AG04450 (cell line): ENCODE measurements at regions of chr2 and their contacts with region 1.

Region 1: DNA sequence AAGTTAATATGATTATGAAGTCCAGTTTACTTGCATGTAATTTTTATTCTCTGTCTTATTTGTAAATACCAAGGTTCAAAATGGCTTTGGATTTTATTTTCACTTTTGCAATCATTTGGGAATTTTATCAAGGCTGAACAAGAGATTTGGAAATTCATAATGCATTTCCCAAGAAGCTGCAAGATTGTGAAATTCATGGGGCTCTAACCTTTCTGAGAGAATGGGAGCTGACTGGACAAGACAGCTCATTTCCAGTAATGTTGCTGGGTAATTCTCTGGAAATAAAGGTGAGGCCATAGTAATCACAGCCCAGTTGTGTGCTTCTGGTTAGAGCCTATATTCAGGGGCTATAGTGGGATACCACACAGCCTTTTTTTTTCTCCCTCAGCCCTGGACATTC is 21.5 kb upstream of the NABP1 start:
- DNase-seq: no peak
- H3K4me3 ChIP-seq: no peak overlapping the region
- H3K27ac ChIP-seq: peak overlapping the region; percentile 47
- H3K27me3 ChIP-seq: no peaks in the 10 kb centered on the region
- CTCF ChIP-seq: no peak

Region 2: DNA sequence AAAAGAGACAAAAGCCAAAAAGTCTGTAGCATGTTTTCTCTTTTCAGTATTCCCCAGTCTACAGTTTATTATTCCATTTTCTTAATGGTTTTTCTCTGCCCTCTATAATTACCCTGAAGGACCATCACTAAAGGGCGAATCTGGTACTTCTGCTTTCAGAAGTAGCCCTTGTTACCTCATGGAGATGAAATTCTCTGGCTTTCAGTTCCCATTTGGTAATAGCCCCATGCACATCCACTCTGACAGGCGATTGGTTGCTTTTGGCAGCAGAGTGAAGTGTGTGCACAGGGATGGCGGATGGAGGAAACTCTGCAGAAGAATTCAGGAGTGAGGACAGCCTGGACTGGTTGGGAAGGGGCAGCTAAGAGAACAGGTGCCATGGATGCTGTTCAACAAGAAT is 44.8 kb before region 1 on chr2:
- CTCF ChIA-PET with region 1: no interaction called
- POLR2A ChIA-PET with region 1: no interaction called
- DNase-seq: no peak
- H3K4me3 ChIP-seq: no peak overlapping the region
- H3K27ac ChIP-seq: peak overlapping the region; percentile 72
- H3K27me3 ChIP-seq: no peaks in the 10 kb centered on the region
- CTCF ChIP-seq: no peak

Region 3: DNA sequence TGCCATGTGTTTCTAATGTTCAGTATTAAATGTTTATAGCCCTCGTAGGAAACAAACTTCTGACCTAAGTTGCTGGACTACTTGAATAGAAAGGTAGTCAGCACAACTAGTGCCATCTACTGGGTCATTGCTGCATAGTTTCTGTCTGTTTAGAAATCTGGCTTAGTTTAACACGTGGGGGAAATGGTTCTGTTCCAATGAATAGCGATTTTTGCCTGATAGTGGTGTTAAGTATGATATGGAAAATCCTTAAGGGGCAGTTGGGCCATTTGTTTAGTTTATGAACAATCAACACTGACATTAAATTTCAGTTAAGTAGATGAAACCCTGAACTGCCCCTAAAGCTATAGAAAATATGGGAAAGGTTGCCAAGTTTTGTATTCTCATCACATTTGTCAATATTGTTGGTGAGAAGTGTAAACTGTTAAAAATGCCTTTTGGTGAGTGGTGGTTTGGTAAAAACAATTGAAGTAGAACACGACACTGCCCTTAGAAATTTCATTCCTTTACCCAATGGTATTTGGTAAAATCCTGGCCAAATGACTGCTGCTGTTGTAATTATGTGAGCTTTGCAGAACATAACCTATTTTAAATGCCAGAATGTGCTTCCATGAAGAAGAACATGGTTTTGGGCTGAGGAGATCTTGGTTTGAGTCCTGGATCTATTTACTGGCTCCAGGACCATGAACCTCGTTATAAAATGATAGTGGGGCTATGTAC is 34.8 kb after region 1 on chr2:
- CTCF ChIA-PET with region 1: interaction called, 10 read pairs
- POLR2A ChIA-PET with region 1: no interaction called
- DNase-seq: peak; percentile 49
- H3K4me3 ChIP-seq: no peak overlapping the region
- H3K27ac ChIP-seq: no peak overlapping the region
- H3K27me3 ChIP-seq: no peaks in the 10 kb centered on the region
- CTCF ChIP-seq: peak; percentile 82